ENCODE measurements at regions of chr20 and their contacts with region 1.

Region 1: DNA sequence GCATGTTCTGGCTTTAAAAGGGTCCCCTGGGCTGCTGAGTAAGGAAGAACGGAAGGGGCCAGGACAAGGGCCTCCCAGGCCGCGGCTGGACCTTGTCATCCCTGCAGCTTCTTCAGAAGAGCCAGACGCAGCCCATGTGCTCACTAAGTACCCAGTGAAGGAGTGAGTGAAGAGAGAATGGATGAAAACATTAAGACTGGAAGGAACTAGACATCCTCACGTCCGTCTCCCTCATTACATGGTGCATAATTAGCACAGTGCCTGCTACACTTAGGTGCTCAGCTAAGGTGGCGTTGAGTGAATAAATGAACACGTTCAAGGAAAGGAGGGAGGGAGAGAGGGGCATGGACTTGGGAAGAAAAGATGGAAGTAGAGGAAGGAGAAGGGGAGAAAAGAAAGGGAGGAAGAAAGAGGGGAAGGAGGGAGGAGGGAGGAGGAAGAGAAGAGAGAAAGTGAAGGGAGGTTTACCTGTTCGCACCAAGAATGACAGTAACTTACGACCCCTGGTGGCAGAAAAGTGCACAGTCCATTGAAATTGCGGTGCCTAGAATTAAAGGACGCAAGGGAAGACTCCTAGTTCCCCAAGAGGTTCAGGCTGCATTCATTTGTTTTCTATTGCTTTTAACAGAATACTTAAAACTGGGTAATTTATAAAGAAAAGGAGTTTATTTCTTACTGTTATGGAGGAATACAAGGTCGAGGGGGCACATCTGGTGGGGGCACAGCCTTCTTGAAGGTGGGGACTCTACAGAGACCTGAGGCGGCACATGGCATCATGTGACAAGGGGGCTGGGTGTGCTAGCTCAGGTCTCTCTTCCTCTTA is 8.0 kb downstream of the TP53RK start:
- DNase-seq: peak; percentile 67
- H3K4me3 ChIP-seq: peak overlapping the region in 1 of 2 experiments; percentile 50; a peak in 1 of 4 replicates
- H3K27ac ChIP-seq: no peak overlapping the region
- H3K4me1 ChIP-seq: peaks cover 0 to 4% of the 10 kb centered on the region in 2 experiments; a peak in 1 of 4 replicates
- H3K27me3 ChIP-seq: no peaks in the 10 kb centered on the region
- CTCF ChIP-seq: peak; percentile 81
- EP300 ChIP-seq: no peak
- RAD21 ChIP-seq: peak; percentile 78

Region 2: GRCh38 chr20:46520976-46521579 is 160.2 kb before region 1 on chr20:
- CTCF ChIA-PET with region 1: interaction called, 116 read pairs
- POLR2A ChIA-PET with region 1: no interaction called
- DNase-seq: peak; percentile 68
- H3K4me3 ChIP-seq: no peak overlapping the region
- H3K27ac ChIP-seq: no peak overlapping the region
- H3K4me1 ChIP-seq: no peaks in the 10 kb centered on the region
- H3K27me3 ChIP-seq: no peaks in the 10 kb centered on the region
- CTCF ChIP-seq: peak; percentile 60
- EP300 ChIP-seq: no peak
- RAD21 ChIP-seq: peak; percentile 94

Region 3: DNA sequence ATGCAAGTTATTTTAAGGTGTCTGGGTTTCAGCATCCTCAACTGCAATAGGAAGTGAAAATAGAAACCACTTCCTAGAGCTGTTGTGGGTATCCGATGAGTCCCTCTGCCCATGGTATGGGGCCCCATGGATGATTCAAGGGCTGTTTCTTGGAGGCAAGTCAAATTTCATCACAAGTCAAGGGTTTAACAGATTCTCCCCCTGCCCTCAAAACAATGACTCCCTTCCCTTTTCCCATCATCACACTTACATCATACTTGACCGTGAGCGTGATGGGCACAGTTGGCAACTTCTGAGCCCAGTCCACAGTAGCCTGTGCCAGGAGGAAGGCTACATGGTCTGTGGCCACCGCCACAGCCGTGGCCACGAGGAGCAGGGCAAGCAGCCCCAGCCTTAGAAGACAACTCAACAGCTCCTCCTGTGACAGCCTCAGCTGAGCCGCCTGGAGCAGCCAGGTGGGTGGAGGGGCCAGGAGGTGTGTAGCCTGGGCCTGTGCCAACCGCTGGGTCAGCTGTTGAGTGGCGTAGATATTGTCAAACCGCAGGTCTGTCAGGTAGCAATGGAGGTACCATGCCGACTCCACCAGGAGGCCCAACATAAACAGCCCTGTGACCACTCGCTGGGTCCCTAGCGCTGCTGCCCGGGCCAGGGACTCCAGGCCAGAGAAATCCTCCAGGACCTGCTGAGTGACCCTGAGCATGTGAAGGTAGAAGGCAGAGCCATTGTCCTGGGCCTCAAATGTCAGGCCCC is 136.0 kb before region 1 on chr20:
- CTCF ChIA-PET with region 1: interaction called, 32 read pairs
- POLR2A ChIA-PET with region 1: no interaction called
- DNase-seq: no peak
- H3K4me3 ChIP-seq: no peak overlapping the region
- H3K27ac ChIP-seq: no peak overlapping the region
- H3K4me1 ChIP-seq: no peaks in the 10 kb centered on the region
- H3K27me3 ChIP-seq: peaks cover 6% of the 10 kb centered on the region; the same call in 1 of the 2 replicates
- CTCF ChIP-seq: no peak
- EP300 ChIP-seq: no peak
- RAD21 ChIP-seq: no peak

Region 4: GRCh38 chr20:46568570-46569129 is 112.6 kb before region 1 on chr20:
- CTCF ChIA-PET with region 1: interaction called, 15 read pairs
- POLR2A ChIA-PET with region 1: no interaction called
- DNase-seq: peak; percentile 83
- H3K4me3 ChIP-seq: no peak overlapping the region
- H3K27ac ChIP-seq: no peak overlapping the region
- H3K4me1 ChIP-seq: peaks cover 0 to 35% of the 10 kb centered on the region in 2 experiments; a peak in 1 of 4 replicates
- H3K27me3 ChIP-seq: no peaks in the 10 kb centered on the region
- CTCF ChIP-seq: no peak
- EP300 ChIP-seq: no peak
- RAD21 ChIP-seq: 0 out of 2 replicates have a peak, but pooled peaks have one; percentile 3